ENCODE measurements at regions of chr4 and their contacts with region 1.

Region 1: GRCh38 chr4:94610145-94610544 is 147.6 kb upstream of the BMPR1B start:
- DNase-seq: no peak
- H3K4me3 Mint-ChIP-seq: no peak overlapping the region
- H3K27ac Mint-ChIP-seq: no peak overlapping the region
- H3K4me1 Mint-ChIP-seq: peaks cover 2% of the 10 kb centered on the region
- H3K27me3 Mint-ChIP-seq: no peaks in the 10 kb centered on the region
- CTCF ChIP-seq: no peak

Region 2: DNA sequence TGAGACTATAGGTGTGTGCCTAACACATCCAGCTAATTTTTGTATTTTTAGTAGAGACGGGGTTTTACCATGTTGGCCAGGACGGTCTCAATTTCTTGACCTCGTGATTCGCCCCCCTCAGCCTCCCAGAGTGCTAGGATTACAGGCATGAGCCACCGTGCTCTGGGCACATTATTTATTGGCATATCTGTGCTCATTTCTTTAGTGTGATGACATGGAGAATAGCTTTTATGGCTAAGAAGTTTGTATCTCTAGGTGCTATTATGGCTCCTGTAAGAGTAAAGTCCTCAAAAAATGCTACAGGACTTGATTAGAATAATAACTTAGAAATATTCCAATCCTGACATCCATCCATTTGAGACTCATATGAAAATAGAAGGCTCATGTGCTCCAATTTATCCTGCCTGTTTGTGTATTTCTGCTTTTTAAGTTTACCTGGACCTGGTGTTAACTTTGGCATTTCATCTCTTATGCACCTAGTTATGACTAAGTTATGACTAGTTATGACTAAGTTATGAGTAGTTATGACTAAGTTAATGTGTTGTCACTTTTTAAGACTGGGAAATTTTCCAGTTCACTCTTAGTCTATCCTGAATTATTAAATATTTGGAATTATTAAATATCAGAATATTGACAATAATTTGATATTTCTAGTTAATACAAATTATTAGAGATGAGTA is 975.0 kb after region 1 on chr4:
- CTCF ChIA-PET with region 1: no interaction called
- intact Hi-C with region 1: loop called (anchors 10 kb)
- DNase-seq: no peak
- H3K4me3 Mint-ChIP-seq: no peak overlapping the region
- H3K27ac Mint-ChIP-seq: no peak overlapping the region
- H3K4me1 Mint-ChIP-seq: no peaks in the 10 kb centered on the region
- H3K27me3 Mint-ChIP-seq: no peaks in the 10 kb centered on the region
- CTCF ChIP-seq: no peak

Measured in Calu3 (cell line).